ENCODE measurements at regions of chrX and their contacts with region 1.

Region 1: DNA sequence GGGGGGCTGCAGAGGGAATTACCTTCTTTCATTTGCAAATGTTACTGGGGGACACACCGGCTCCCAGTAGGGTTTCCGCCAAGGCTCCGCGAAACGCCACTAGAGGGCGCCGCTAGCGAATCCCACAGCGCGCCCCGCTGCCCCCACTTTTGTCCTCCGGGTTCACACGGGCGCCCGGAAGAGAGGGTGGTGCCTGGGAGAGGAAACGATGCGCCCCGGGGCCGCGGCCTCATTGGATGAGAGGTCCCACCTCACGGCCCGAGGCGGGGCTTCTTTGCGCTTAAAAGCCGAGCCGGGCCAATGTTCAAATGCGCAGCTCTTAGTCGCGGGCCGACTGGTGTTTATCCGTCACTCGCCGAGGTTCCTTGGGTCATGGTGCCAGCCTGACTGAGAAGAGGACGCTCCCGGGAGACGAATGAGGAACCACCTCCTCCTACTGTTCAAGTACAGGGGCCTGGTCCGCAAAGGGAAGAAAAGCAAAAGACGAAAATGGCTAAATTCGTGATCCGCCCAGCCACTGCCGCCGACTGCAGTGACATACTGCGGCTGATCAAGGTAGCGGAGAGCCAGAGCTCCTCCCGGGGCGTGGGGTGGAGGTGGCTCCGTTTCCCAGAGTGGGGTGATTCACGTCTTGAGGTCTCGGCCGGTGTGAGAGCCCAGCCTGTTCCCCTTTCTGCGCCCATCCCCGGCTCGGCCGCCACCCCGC is at the start of gene SAT1:
- DNase-seq: peak; percentile 78
- ATAC-seq: peak; percentile 85
- H3K4me3 Mint-ChIP-seq: peak within 1 kb of the TSS; percentile 94
- H3K27ac Mint-ChIP-seq: peak within 1 kb of the TSS; percentile 95
- H3K4me1 Mint-ChIP-seq: peaks cover 43% of the 10 kb centered on the region
- H3K27me3 Mint-ChIP-seq: no peaks in the 10 kb centered on the region
- CTCF ChIP-seq: no peak
- total RNA-seq, gene SAT1: 75.1 and 88.9 TPM in 2 replicates

Region 2: DNA sequence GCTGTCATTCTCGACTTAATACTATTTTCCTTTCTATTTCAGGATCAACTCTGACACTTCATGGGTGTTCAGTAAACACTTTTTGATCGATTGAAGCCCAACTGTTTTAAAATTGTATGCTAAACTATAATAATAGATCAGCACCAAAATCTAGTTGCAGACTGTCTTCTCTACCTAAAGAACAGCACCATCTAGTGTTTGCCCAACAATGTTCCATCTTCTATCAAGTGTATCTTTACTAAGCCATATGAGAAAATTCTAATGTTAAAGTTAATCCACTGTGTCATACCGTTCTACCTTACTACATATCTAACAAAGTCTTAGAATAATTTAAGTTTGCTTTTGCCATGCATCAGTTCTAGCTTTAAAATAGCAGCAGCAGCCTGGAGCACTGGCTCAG is 228.7 kb before region 1 on chrX:
- CTCF ChIA-PET with region 1: no interaction called
- POLR2A ChIA-PET with region 1: no interaction called
- intact Hi-C with region 1: no loop called
- DNase-seq: no peak
- ATAC-seq: no peak
- H3K4me3 Mint-ChIP-seq: no peak overlapping the region
- H3K27ac Mint-ChIP-seq: no peak overlapping the region
- H3K4me1 Mint-ChIP-seq: no peaks in the 10 kb centered on the region
- H3K27me3 Mint-ChIP-seq: no peaks in the 10 kb centered on the region
- CTCF ChIP-seq: no peak

Region 3: DNA sequence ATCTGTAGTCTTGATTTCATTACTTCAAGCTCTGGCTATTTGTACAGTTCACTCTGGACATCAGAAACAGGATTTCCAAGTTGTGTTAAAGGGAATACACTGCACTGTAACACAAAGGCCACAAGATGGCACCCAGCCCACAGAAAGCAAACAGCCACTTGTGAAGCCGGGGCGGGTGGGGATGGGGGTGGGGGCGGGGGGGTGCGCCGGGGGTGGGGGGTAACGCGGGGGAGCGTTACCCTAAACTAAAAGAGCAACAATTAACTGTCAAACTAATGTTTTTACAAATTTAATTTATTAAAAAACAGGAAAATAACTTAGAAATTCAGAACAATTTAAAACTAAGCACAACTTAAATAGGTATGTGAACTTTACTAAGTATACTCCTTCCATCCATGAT is 88.4 kb before region 1 on chrX:
- CTCF ChIA-PET with region 1: interaction called, 3 read pairs
- POLR2A ChIA-PET with region 1: interaction called, 12 read pairs
- intact Hi-C with region 1: loop called (anchors 1 kb)
- DNase-seq: no peak
- ATAC-seq: peak; percentile 78
- H3K4me3 Mint-ChIP-seq: no peak overlapping the region
- H3K27ac Mint-ChIP-seq: no peak overlapping the region
- H3K4me1 Mint-ChIP-seq: no peaks in the 10 kb centered on the region
- H3K27me3 Mint-ChIP-seq: no peaks in the 10 kb centered on the region
- CTCF ChIP-seq: no peak

Region 4: DNA sequence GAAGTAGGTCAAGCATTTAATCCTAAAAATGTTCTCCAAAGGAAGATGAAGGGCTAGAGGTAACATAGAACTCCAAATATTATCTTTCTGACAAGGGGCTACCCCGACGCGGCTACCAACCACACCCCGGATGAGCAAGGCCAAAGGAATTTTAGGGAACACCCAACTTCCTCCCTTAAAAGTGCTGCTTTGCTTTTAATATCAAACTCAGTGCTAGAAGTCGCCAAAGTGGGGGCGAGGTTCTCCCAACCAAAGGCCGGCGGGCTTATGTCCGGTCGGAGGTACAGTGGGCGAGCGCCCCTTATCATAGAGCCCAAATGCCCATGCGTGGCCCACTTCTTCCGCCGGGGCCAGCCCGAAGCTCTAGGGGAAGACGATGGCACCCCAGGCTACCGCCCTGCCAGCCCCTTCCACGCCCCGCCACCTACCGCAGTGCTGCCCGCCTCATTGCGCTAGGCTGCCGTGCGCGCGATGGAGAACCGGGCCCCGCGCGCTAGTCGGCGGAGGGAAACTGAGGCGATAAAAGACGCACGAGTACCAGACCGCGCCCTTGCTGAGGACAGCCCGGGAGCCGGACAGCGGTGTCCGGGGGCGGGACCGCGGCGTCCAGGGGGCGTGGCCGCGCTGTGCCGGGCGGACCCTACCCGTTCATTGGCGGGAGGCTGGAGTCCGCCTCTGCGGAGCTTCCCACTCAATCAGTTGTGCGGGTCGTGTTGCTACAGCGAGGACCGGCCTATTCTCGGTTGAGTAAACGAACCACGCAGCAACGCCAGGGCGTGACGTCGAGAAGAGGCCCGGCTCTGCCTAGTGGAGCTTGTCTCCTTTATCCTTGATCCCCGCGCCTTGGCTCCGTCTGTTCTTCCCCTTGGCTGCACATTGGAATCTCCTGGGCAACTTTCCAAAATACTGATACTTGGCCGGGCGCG is 40.1 kb before region 1 on chrX and contains the start of gene ACOT9:
- CTCF ChIA-PET with region 1: interaction called, 3 read pairs
- POLR2A ChIA-PET with region 1: interaction called, 57 read pairs
- intact Hi-C with region 1: loop called (anchors 1 kb)
- DNase-seq: peak; percentile 66
- ATAC-seq: peak; percentile 90
- H3K4me3 Mint-ChIP-seq: peak within 1 kb of the TSS; percentile 92
- H3K27ac Mint-ChIP-seq: peak within 1 kb of the TSS; percentile 92
- H3K4me1 Mint-ChIP-seq: peaks cover 34% of the 10 kb centered on the region
- H3K27me3 Mint-ChIP-seq: no peaks in the 10 kb centered on the region
- CTCF ChIP-seq: no peak
- total RNA-seq, gene ACOT9: 46.0 and 49.4 TPM in 2 replicates

Region 5: DNA sequence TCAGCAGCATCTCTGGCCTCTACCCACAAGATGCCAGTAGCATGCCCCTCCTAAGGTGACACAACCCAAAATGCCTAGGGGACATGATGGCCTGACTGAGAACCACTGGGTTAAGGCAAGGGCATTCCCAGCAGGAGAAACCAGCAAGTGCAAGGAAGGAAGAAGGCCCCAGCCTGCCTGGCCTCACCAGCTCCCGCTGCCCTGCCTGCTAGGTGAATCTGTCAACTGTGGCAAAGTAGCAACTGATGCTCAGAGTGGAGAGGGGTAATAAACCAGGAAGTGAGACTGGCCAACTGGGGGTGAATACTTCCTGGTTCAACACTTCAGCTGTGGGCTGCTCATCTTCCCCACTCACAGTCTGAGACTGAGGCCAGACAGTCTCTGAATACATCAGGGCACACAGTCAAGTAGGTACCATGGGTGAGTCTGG is 34.2 kb after region 1 on chrX:
- CTCF ChIA-PET with region 1: no interaction called
- POLR2A ChIA-PET with region 1: interaction called, 15 read pairs
- intact Hi-C with region 1: loop called (anchors 5 kb)
- DNase-seq: peak; percentile 27
- ATAC-seq: peak; percentile 98
- H3K4me3 Mint-ChIP-seq: no peak overlapping the region
- H3K27ac Mint-ChIP-seq: peak overlapping the region; percentile 93
- H3K4me1 Mint-ChIP-seq: peaks cover 6% of the 10 kb centered on the region
- H3K27me3 Mint-ChIP-seq: no peaks in the 10 kb centered on the region
- CTCF ChIP-seq: no peak

Region 6: GRCh38 chrX:24024819-24025740 is 242.1 kb after region 1 on chrX:
- CTCF ChIA-PET with region 1: no interaction called
- POLR2A ChIA-PET with region 1: interaction called, 13 read pairs
- intact Hi-C with region 1: loop called (anchors 1 kb)
- DNase-seq: peak; percentile 70
- ATAC-seq: peak; percentile 91
- H3K4me3 Mint-ChIP-seq: peak overlapping the region; percentile 85
- H3K27ac Mint-ChIP-seq: peak overlapping the region; percentile 82
- H3K4me1 Mint-ChIP-seq: peaks cover 21% of the 10 kb centered on the region
- H3K27me3 Mint-ChIP-seq: no peaks in the 10 kb centered on the region
- CTCF ChIP-seq: no peak

Measured in activated B cell treated with CpG ODN at 0.5 μM for 24 hours (primary cell).